IMR-90 (cell line): ENCODE measurements at regions of chr6 and their contacts with region 1.

Region 1: DNA sequence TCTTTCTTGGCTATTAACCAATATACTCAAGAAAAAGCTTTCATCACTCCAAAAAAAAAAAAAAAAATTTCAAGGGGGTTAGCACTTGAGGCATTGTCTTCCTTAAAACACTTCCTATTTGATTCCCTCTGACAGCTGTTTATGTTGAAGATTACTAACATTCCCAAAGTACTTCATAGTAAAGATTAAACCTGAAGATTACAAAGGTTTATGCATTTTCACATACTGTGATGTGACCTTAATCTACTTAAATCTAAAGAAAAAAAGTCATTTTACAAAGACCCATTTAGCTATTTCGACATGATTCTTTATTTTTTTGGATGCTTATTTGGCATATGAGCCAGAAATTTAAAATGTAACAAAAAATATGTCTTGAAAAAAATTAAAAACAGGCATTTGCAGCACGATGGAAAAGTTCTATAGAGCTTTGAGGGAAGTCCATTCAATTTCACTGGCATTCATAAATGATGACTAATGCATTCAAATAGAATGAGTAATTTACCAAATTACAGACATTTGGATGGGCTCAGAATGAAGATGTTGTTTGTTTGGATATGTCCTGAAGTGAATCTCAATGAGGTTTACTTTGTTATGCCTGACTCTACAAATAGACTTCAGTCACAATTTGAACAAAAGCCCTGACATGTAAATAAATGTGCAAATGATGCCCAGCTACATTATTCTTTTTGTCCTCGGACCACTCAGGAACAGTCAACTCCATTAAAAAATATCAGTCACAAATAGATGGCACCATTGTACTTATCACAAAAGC is 674.6 kb upstream of the MARCKS start:
- DNase-seq: peak; percentile 83
- ATAC-seq: peak; percentile 47
- H3K4me3 ChIP-seq: no peak overlapping the region
- H3K27ac ChIP-seq: no peak overlapping the region; the same call in 1 of the 2 replicates
- H3K4me1 ChIP-seq: peaks cover 13% of the 10 kb centered on the region
- H3K27me3 ChIP-seq: no peaks in the 10 kb centered on the region
- CTCF ChIP-seq: no peak
- POLR2A ChIP-seq: no peak
- RAD21 ChIP-seq: no peak

Region 2: DNA sequence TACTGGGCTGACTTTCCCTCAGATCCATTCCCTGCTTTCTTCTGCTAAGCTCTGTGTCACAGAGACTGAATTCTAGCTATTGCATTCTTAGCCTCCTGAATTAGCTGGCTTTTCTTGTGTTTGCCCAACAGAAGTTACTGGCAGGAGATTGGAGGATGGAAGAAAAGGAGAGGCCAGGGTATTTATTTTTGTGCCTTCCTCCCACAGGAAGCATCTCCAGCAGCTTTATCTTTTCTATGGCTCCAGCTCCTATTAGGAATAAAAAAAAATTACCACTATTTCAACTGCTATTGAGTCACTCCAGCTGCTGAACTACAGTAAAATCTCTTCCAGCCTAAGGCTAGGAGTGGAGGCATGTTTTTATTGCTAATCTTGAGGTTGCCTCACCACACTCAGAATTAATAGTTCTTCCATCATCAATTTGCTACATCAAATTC is 343.0 kb before region 1 on chr6:
- CTCF ChIA-PET with region 1: no interaction called
- POLR2A ChIA-PET with region 1: no interaction called
- dilution Hi-C with region 1: no loop called
- in situ Hi-C with region 1: no loop called
- intact Hi-C with region 1: no loop called
- DNase-seq: peak; percentile 88
- ATAC-seq: peak; percentile 96
- H3K4me3 ChIP-seq: no peak overlapping the region
- H3K27ac ChIP-seq: peak overlapping the region; percentile 60; the same call in 1 of the 2 replicates
- H3K4me1 ChIP-seq: peaks cover 2% of the 10 kb centered on the region; the same call in 1 of the 2 replicates
- H3K27me3 ChIP-seq: no peaks in the 10 kb centered on the region
- CTCF ChIP-seq: no peak
- POLR2A ChIP-seq: no peak
- RAD21 ChIP-seq: no peak

Region 3: GRCh38 chr6:113375950-113376846 is 193.6 kb after region 1 on chr6:
- CTCF ChIA-PET with region 1: no interaction called
- POLR2A ChIA-PET with region 1: no interaction called
- dilution Hi-C with region 1: no loop called
- in situ Hi-C with region 1: no loop called
- intact Hi-C with region 1: loop called (anchors 5 kb)
- DNase-seq: peak; percentile 84
- ATAC-seq: peak; percentile 71
- H3K4me3 ChIP-seq: no peak overlapping the region
- H3K27ac ChIP-seq: peak overlapping the region; percentile 91
- H3K4me1 ChIP-seq: peaks cover 11% of the 10 kb centered on the region
- H3K27me3 ChIP-seq: no peaks in the 10 kb centered on the region
- CTCF ChIP-seq: no peak
- POLR2A ChIP-seq: no peak
- RAD21 ChIP-seq: no peak